ENCODE measurements at regions of chr2 and their contacts with region 1.

Region 1: GRCh38 chr2:229800997-229801754 is 86.8 kb upstream of the DNER start:
- DNase-seq: peak; percentile 67
- CTCF ChIP-seq: peak; percentile 59

Region 2: DNA sequence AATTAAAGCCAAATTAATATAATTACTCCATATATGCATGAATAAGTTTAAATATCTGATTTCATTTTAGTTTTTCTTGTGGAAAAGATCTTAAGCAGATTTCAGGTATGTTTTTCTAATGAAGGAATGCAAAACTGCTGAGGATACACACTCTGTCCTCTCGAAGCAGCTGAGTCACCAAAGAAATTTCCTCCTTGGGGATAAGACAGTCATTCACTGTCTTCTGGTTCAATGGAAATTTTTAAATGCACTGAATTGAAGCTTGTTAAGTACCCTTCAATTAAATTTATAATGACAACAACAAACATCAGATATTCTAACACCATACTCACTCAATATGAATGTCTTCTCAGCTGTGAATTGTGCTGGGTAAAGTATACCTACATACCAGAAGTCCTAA is 14.7 kb after region 1 on chr2:
- CTCF ChIA-PET with region 1: interaction called, 32 read pairs
- POLR2A ChIA-PET with region 1: no interaction called
- DNase-seq: no peak
- CTCF ChIP-seq: no peak

Region 3: DNA sequence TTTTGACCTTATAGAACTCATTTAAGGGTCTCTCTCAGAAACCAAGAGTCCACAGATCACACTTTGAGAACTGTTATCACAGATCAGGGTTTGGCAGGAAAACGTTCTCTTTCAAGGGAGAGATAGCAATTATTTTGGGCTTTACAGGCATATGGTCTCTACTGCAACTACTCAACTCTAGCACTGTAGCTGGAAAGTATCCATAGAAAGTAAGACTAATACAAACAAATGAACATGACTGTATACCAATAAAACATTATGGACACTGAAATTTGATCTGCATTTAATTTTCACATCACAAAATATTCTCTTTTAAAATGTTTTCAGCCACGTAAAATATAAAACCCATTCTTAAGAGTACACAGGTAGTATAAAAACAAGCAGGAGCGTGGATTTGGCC is 20.1 kb after region 1 on chr2:
- CTCF ChIA-PET with region 1: interaction called, 32 read pairs
- POLR2A ChIA-PET with region 1: no interaction called
- DNase-seq: no peak
- CTCF ChIP-seq: no peak

Region 4: GRCh38 chr2:229835596-229836283 is 34.6 kb after region 1 on chr2:
- CTCF ChIA-PET with region 1: interaction called, 23 read pairs
- POLR2A ChIA-PET with region 1: no interaction called
- DNase-seq: no peak
- CTCF ChIP-seq: no peak

Region 5: GRCh38 chr2:229910832-229911412 is 109.7 kb after region 1 on chr2:
- CTCF ChIA-PET with region 1: interaction called, 21 read pairs
- POLR2A ChIA-PET with region 1: no interaction called
- DNase-seq: peak; percentile 45
- CTCF ChIP-seq: peak; percentile 58

Region 6: DNA sequence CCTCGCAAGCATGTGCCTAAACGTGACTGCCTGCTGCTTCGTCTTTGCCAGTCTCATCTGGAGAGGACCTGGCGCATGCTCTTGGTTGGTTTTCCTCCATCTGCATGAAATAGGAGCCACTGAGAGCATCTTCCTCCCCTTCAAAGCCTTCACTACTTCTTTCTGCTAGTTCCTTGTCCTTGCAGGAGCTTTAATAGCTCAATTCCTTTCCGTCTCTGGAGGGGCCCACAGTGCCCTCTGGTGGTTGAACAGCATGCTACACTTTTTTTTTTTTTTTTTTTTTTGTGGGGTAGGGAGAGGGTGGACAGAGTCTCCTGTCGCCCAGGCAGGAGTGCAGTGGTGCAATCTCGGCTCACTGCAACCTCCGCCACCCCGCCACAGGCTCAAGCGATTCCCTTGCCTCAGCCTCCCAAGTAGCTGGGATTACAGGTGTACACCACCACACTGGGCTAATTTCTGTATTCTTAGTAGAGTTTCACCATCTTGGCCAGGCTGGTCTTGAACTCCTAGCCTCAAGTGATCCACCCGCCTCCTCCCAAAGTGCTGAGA is 359.0 kb after region 1 on chr2:
- CTCF ChIA-PET with region 1: no interaction called
- POLR2A ChIA-PET with region 1: no interaction called
- DNase-seq: peak; percentile 77
- CTCF ChIP-seq: peak; percentile 64

Measured in GM10248 (cell line).